Activated B cell treated with CpG ODN at 0.5 μM for 24 hours (primary cell): ENCODE measurements at regions of chr10 and their contacts with region 1.

Region 1: DNA sequence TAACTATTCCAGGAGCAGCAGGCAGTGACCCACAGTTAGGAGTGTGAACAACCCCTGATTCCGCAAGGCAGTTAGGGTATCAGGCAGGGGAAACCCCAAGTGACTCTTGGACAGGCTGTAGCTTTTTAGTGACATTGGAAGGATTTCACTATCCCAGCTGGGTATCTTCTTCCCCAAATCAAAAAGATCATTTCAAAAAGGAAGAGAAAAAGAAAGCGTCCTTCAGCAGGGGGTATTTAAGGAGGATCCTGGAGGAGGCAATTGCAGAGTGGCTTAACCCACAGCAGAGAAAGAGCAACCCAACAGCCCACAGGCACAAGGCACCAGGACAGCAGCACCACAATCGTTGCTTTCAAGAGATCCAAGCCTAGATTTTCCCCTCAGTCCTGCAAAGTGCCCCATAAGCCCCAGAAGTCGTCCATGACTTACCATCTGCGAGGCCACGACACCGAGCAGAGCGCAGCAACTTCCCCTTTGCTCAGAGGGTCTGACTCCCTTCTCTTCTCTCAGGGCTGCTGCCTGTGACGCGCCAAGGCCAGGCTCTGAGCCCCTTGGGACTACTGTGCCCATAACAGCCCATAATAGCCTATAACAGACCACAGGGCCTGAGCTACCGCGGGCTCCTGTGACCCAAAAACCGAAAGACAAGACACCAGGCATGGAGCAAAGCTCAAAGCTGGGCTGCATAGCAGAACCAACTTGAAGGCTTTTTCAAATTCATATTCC is 19.8 kb downstream of the PIK3AP1 start:
- DNase-seq: peak; percentile 70
- ATAC-seq: peak; percentile 90
- H3K4me3 Mint-ChIP-seq: peak overlapping the region; percentile 94
- H3K27ac Mint-ChIP-seq: peak overlapping the region; percentile 97
- H3K4me1 Mint-ChIP-seq: peaks cover 89% of the 10 kb centered on the region
- H3K27me3 Mint-ChIP-seq: no peaks in the 10 kb centered on the region
- CTCF ChIP-seq: no peak

Region 2: DNA sequence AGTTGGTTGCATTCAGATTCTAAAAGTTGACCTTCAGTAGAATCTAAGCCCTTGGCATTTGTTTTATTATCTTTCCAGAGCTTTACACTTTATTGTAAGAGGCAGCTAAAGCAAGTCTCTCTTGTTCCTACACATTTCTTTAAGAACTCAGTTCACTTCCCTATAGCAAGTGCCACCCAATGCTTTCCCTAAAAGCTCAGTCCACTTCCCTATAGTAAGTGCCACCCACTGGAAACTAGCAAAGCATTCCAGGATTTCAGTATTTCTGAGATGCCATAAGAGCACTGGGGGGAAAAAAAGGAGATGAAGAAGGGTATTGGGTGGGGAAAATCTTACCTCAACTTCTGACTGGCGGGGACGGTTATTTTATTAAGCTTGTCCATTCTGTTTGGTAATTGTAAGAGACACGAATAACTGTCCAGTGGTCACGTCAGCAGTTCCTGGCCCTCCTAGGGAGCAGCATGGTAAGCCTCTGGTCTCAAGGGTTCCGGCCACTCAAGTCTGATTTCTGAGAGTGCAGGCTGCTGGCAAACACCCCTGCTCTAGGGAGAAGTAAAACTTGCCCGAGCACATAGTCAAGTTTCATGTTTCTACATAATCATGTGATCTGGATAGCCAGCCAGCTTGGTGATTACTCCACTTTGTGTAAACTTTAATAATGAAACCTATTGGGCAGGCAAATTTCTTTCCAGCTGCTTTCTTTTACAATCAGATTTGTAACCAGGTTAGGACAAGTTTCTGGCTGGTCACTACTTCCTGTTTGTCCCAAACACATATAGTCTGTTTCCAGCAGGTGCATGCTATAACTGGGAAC is 429.3 kb before region 1 on chr10 and contains the start of gene BLNK:
- CTCF ChIA-PET with region 1: no interaction called
- POLR2A ChIA-PET with region 1: interaction called, 3 read pairs
- intact Hi-C with region 1: loop called (anchors 10 kb)
- DNase-seq: peak; percentile 40
- ATAC-seq: peak; percentile 56
- H3K4me3 Mint-ChIP-seq: peak within 1 kb of the TSS; percentile 91
- H3K27ac Mint-ChIP-seq: peak within 1 kb of the TSS; percentile 98
- H3K4me1 Mint-ChIP-seq: peaks cover 81% of the 10 kb centered on the region
- H3K27me3 Mint-ChIP-seq: no peaks in the 10 kb centered on the region
- CTCF ChIP-seq: no peak
- total RNA-seq, gene BLNK: 238 and 267 TPM in 2 replicates

Region 3: GRCh38 chr10:96287392-96288105 is 413.0 kb before region 1 on chr10:
- CTCF ChIA-PET with region 1: no interaction called
- POLR2A ChIA-PET with region 1: no interaction called
- intact Hi-C with region 1: no loop called
- DNase-seq: no peak
- ATAC-seq: peak; percentile 72
- H3K4me3 Mint-ChIP-seq: peak overlapping the region; percentile 75
- H3K27ac Mint-ChIP-seq: peak overlapping the region; percentile 96
- H3K4me1 Mint-ChIP-seq: peaks cover 75% of the 10 kb centered on the region
- H3K27me3 Mint-ChIP-seq: no peaks in the 10 kb centered on the region
- CTCF ChIP-seq: no peak

Region 4: DNA sequence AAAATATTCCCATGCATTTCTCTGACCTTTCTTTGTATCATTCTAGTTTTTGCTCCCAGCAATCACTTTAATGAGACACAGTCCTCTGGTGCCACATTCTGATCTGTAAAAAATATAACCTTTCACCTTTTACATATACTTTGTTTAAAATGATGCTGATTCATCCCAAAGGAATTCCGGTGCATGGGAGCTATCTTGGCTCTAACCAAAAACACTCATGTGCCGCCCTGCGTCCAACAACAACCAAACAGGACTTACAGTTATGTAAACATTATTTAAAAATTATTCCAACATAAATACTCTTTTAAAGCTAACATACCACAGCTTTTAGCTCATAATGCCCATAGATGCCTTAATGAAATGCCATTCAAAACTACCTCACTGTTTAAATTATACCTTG is 334.0 kb before region 1 on chr10:
- CTCF ChIA-PET with region 1: no interaction called
- POLR2A ChIA-PET with region 1: no interaction called
- intact Hi-C with region 1: no loop called
- DNase-seq: no peak
- ATAC-seq: no peak
- H3K4me3 Mint-ChIP-seq: no peak overlapping the region
- H3K27ac Mint-ChIP-seq: no peak overlapping the region
- H3K4me1 Mint-ChIP-seq: no peaks in the 10 kb centered on the region
- H3K27me3 Mint-ChIP-seq: no peaks in the 10 kb centered on the region
- CTCF ChIP-seq: no peak

Region 5: DNA sequence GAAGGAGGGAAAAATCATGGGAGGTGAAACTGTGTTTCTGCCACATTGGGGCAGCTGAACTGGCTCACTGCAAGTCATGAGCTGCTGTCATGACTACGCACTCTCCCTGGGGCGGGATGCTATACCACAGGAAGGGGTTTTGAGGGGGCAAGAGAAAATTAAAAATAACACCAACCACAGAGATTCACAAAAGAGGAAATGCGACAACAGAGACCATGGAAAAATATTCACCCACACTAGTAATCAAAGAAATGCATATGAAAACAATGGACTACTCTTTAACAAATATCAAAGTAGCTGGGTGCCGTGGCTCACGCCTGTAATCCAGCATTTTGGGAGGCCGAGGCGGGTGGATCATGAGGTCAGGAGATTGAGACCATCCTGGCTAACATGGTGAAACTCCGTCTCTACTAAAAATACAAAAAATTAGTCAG is 48.5 kb before region 1 on chr10:
- CTCF ChIA-PET with region 1: interaction called, 3 read pairs
- POLR2A ChIA-PET with region 1: interaction called, 19 read pairs
- intact Hi-C with region 1: loop called (anchors 1 kb)
- DNase-seq: peak; percentile 42
- ATAC-seq: peak; percentile 85
- H3K4me3 Mint-ChIP-seq: peak overlapping the region; percentile 60
- H3K27ac Mint-ChIP-seq: peak overlapping the region; percentile 89
- H3K4me1 Mint-ChIP-seq: peaks cover 87% of the 10 kb centered on the region
- H3K27me3 Mint-ChIP-seq: no peaks in the 10 kb centered on the region
- CTCF ChIP-seq: no peak

Region 6: DNA sequence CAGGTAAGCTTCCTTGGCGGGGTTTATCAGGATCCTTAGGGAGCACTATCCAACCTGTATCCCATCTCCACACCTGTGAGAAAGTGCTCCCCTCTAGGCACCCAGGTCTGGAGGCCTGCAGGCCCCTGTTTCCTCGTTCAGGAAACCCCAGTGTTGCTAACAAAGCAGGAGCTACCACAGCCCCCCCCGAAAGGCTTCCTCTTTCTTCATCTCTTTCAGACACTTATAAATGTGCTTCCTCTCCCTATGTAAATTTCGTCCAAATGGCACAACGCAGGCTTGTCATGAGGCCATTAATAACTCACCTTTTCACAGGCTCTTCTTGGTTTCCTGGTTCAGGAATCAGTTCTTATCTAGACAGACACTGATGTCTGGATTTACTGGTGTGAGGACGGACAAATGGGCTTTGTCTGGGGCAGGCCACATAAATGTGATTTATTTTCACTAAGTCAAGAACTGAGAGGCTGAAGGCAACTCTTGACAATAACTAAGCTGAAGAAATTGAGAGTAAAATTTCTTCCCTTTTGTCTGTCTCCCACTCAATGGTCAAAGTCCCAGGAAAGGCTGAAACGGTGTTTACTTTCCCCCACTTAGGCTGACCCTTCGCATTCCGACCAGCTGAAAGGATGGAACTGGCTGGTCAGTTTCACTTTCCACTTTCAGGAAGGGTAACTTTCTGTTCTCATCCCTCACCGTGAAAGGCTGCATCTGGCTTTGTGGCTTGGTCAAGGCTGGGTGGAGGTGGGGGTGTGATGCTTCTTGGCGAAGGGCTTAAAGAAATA is 27.0 kb before region 1 on chr10:
- CTCF ChIA-PET with region 1: interaction called, 4 read pairs
- POLR2A ChIA-PET with region 1: interaction called, 31 read pairs
- intact Hi-C with region 1: loop called (anchors 1 kb)
- DNase-seq: peak; percentile 39
- ATAC-seq: peak; percentile 83
- H3K4me3 Mint-ChIP-seq: peak overlapping the region; percentile 77
- H3K27ac Mint-ChIP-seq: peak overlapping the region; percentile 99
- H3K4me1 Mint-ChIP-seq: peaks cover 90% of the 10 kb centered on the region
- H3K27me3 Mint-ChIP-seq: no peaks in the 10 kb centered on the region
- CTCF ChIP-seq: no peak

Region 7: GRCh38 chr10:97217299-97217698 is 516.8 kb after region 1 on chr10:
- CTCF ChIA-PET with region 1: no interaction called
- POLR2A ChIA-PET with region 1: no interaction called
- intact Hi-C with region 1: no loop called
- DNase-seq: no peak
- ATAC-seq: no peak
- H3K4me3 Mint-ChIP-seq: no peak overlapping the region
- H3K27ac Mint-ChIP-seq: no peak overlapping the region
- H3K4me1 Mint-ChIP-seq: peaks cover 3% of the 10 kb centered on the region
- H3K27me3 Mint-ChIP-seq: no peaks in the 10 kb centered on the region
- CTCF ChIP-seq: no peak

Region 8: GRCh38 chr10:97425964-97426775 is 725.6 kb after region 1 on chr10 and contains the start of gene PGAM1:
- CTCF ChIA-PET with region 1: no interaction called
- POLR2A ChIA-PET with region 1: no interaction called
- intact Hi-C with region 1: loop called (anchors 10 kb)
- DNase-seq: peak; percentile 97
- ATAC-seq: peak; percentile 88
- H3K4me3 Mint-ChIP-seq: peak within 1 kb of the TSS; percentile 92
- H3K27ac Mint-ChIP-seq: peak within 1 kb of the TSS; percentile 94
- H3K4me1 Mint-ChIP-seq: peaks cover 43% of the 10 kb centered on the region
- H3K27me3 Mint-ChIP-seq: no peaks in the 10 kb centered on the region
- CTCF ChIP-seq: no peak
- total RNA-seq, gene PGAM1: 162 and 166 TPM in 2 replicates

Region 9: DNA sequence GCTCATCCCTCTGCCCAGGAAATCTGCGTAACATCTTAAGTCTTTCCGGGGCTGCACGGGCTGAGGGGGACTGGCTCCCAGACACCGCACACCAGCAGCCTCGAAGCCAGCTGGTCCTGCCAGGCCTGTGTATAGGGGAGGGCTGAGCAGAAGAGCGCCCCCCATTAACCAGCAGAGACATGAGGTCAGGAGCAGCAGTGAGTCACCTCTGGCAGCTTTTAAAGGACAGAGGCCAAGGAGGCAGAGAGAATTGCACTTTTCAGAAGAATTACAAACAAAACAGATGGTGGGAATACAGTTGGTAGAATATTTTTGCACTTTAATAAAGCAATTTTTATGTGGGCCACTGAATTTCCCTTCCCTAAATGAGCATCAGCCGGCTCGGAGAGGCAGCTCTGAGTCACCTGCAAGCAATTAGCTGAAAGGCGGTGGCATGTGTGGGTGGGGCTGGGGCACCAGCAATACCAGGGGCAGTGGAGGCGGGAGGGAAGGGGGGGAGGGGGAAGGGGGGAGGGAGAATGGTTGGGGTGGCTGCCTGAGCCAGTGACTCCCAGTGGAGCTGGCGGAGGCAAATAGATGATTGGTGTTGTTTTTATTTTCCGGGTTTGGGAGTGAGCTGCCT is 1188.2 kb after region 1 on chr10:
- CTCF ChIA-PET with region 1: no interaction called
- POLR2A ChIA-PET with region 1: no interaction called
- intact Hi-C with region 1: no loop called
- DNase-seq: no peak
- ATAC-seq: no peak
- H3K4me3 Mint-ChIP-seq: no peak overlapping the region
- H3K27ac Mint-ChIP-seq: no peak overlapping the region
- H3K4me1 Mint-ChIP-seq: no peaks in the 10 kb centered on the region
- H3K27me3 Mint-ChIP-seq: peaks cover 6% of the 10 kb centered on the region
- CTCF ChIP-seq: no peak